ENCODE measurements at regions of chr14 and their contacts with region 1.

Region 1: GRCh38 chr14:70955543-70956480 is 48.6 kb downstream of the PCNX1 start:
- DNase-seq: peak; percentile 10 to 78 (median 55)
- ATAC-seq: peak; percentile 94
- H3K4me3 ChIP-seq: no peak overlapping the region
- H3K4me3 Mint-ChIP-seq: no peak overlapping the region
- H3K27ac ChIP-seq: no peak overlapping the region
- H3K27ac Mint-ChIP-seq: no peak overlapping the region
- H3K4me1 ChIP-seq: peaks cover 20% of the 10 kb centered on the region
- H3K4me1 Mint-ChIP-seq: peaks cover 35% of the 10 kb centered on the region
- H3K27me3 ChIP-seq: no peaks in the 10 kb centered on the region
- H3K27me3 Mint-ChIP-seq: no peaks in the 10 kb centered on the region
- CTCF ChIP-seq: peak; percentile 90

Region 2: DNA sequence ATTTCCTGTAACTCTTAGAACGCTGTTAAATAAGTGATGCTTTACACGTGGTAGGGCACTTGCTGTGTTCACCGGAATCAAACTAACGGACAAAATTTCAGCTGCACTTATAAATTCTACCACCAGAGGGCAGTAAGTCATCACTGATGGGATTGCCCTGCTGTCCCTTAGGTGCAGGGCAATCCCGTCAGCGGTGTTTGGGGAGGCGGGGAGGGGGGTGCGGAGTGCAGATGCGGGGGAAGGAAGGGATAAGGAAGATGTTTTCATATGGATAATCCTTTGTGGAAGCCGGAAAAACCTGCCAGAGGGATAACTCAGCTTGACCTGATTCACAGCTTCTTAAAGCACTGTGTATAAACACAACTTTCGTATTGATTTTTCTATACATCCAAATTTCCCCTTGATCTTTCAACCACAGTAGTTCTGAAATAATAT is 1137.0 kb before region 1 on chr14:
- CTCF ChIA-PET with region 1: no interaction called
- POLR2A ChIA-PET with region 1: no interaction called
- intact Hi-C with region 1: loop called in 1 of 2 experiments (anchors 5 kb)
- DNase-seq: peak; percentile 6 to 74 (median 25)
- ATAC-seq: peak; percentile 73
- H3K4me3 ChIP-seq: no peak overlapping the region
- H3K4me3 Mint-ChIP-seq: no peak overlapping the region
- H3K27ac ChIP-seq: no peak overlapping the region
- H3K27ac Mint-ChIP-seq: no peak overlapping the region
- H3K4me1 ChIP-seq: no peaks in the 10 kb centered on the region
- H3K4me1 Mint-ChIP-seq: peaks cover 4% of the 10 kb centered on the region
- H3K27me3 ChIP-seq: no peaks in the 10 kb centered on the region
- H3K27me3 Mint-ChIP-seq: peaks cover 3% of the 10 kb centered on the region
- CTCF ChIP-seq: peak; percentile 89

Region 3: DNA sequence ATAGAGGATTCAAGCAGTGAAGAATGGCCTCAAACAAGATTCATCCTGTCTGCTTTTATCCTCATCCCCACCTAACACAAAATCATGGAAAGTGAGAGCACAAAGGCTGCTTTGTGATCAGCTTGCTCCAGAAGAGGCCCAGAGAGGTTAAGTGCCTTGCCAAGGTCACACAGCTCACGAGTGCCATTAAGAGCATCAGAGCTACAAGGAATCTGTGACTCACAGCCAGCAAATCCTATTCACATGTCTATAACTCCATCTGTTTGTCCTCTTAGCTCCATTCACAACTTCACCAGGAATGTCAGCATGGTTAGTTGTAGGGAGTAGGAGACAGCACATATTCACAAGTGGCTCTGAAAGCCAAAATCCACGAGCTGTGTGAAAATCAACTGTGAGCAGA is 234.3 kb before region 1 on chr14:
- CTCF ChIA-PET with region 1: no interaction called
- POLR2A ChIA-PET with region 1: no interaction called
- intact Hi-C with region 1: loop called in 1 of 2 experiments (anchors 10 kb)
- DNase-seq: no peak
- ATAC-seq: no peak
- H3K4me3 ChIP-seq: no peak overlapping the region
- H3K4me3 Mint-ChIP-seq: no peak overlapping the region
- H3K27ac ChIP-seq: no peak overlapping the region
- H3K27ac Mint-ChIP-seq: no peak overlapping the region
- H3K4me1 ChIP-seq: no peaks in the 10 kb centered on the region
- H3K4me1 Mint-ChIP-seq: no peaks in the 10 kb centered on the region
- H3K27me3 ChIP-seq: no peaks in the 10 kb centered on the region
- H3K27me3 Mint-ChIP-seq: no peaks in the 10 kb centered on the region
- CTCF ChIP-seq: no peak

Region 4: DNA sequence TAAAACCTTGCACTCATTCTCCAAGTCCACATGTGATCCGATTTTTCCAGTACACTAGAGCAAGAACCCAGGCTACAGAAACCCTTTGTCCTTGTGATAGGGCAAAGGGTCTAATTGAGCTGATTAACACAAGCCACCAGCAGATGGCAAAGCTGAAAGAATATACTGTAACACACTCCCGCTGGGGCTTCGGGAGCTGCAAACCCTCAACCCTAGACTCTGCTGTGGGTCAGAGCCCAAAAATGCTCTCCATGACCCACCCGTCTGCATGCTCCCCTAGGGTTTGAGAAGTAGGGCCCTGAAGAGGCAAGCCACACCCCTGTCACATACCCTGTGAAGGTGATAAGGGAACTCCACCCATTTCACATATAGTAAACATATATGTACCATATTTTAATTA is 82.2 kb before region 1 on chr14:
- CTCF ChIA-PET with region 1: interaction called, 8 read pairs
- POLR2A ChIA-PET with region 1: no interaction called
- intact Hi-C with region 1: loop called (anchors 1 kb)
- DNase-seq: peak in 3 of 9 experiments; percentile 41 to 50 (median 43)
- ATAC-seq: no peak
- H3K4me3 ChIP-seq: no peak overlapping the region
- H3K4me3 Mint-ChIP-seq: no peak overlapping the region
- H3K27ac ChIP-seq: no peak overlapping the region
- H3K27ac Mint-ChIP-seq: peak overlapping the region; percentile 9
- H3K4me1 ChIP-seq: peaks cover 17% of the 10 kb centered on the region
- H3K4me1 Mint-ChIP-seq: peaks cover 13% of the 10 kb centered on the region
- H3K27me3 ChIP-seq: no peaks in the 10 kb centered on the region
- H3K27me3 Mint-ChIP-seq: no peaks in the 10 kb centered on the region
- CTCF ChIP-seq: no peak

Region 5: GRCh38 chr14:70919774-70920173 is 36.0 kb before region 1 on chr14:
- CTCF ChIA-PET with region 1: interaction called, 14 read pairs
- POLR2A ChIA-PET with region 1: interaction called, 4 read pairs
- intact Hi-C with region 1: no loop called
- DNase-seq: peak in 3 of 9 experiments; percentile 27 to 50 (median 32)
- ATAC-seq: peak; percentile 37
- H3K4me3 ChIP-seq: no peak overlapping the region
- H3K4me3 Mint-ChIP-seq: peak overlapping the region; percentile 59
- H3K27ac ChIP-seq: peak overlapping the region in 1 of 2 experiments; percentile 61
- H3K27ac Mint-ChIP-seq: peak overlapping the region; percentile 89
- H3K4me1 ChIP-seq: peaks cover 86% of the 10 kb centered on the region
- H3K4me1 Mint-ChIP-seq: peaks cover 90% of the 10 kb centered on the region
- H3K27me3 ChIP-seq: no peaks in the 10 kb centered on the region
- H3K27me3 Mint-ChIP-seq: no peaks in the 10 kb centered on the region
- CTCF ChIP-seq: no peak

Region 6: DNA sequence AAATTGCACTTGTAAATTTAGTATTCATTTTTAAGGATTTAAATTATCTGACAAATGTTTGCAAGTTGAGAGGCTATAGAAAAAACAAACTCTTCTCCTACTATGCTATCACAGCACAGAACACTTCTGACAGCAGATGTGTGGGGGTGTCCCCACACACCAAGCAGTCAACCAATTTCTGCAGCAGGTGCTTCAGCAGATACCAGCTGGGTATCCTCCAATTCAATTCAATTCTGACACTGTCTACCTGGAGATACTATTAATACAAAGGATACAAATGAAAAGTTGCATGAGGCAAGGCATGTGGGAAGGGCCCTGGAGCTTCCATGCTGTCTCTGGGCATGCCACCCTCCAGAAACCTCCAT is 13.5 kb before region 1 on chr14:
- CTCF ChIA-PET with region 1: interaction called, 33 read pairs
- POLR2A ChIA-PET with region 1: interaction called, 7 read pairs
- intact Hi-C with region 1: loop called in 1 of 2 experiments (anchors 1 kb)
- DNase-seq: no peak
- ATAC-seq: peak; percentile 23
- H3K4me3 ChIP-seq: no peak overlapping the region
- H3K4me3 Mint-ChIP-seq: peak overlapping the region; percentile 11
- H3K27ac ChIP-seq: no peak overlapping the region
- H3K27ac Mint-ChIP-seq: peak overlapping the region; percentile 86
- H3K4me1 ChIP-seq: peaks cover 22% of the 10 kb centered on the region
- H3K4me1 Mint-ChIP-seq: peaks cover 69% of the 10 kb centered on the region
- H3K27me3 ChIP-seq: no peaks in the 10 kb centered on the region
- H3K27me3 Mint-ChIP-seq: no peaks in the 10 kb centered on the region
- CTCF ChIP-seq: no peak